Calu3 (cell line): ENCODE measurements at regions of chr3 and their contacts with region 1.

Region 1: GRCh38 chr3:124786441-124787241 is 56.4 kb downstream of the UMPS start:
- DNase-seq: peak; percentile 8
- H3K4me3 Mint-ChIP-seq: no peak overlapping the region
- H3K27ac Mint-ChIP-seq: peak overlapping the region; percentile 8
- H3K4me1 Mint-ChIP-seq: peaks cover 12% of the 10 kb centered on the region
- H3K27me3 Mint-ChIP-seq: no peaks in the 10 kb centered on the region
- CTCF ChIP-seq: no peak

Region 2: DNA sequence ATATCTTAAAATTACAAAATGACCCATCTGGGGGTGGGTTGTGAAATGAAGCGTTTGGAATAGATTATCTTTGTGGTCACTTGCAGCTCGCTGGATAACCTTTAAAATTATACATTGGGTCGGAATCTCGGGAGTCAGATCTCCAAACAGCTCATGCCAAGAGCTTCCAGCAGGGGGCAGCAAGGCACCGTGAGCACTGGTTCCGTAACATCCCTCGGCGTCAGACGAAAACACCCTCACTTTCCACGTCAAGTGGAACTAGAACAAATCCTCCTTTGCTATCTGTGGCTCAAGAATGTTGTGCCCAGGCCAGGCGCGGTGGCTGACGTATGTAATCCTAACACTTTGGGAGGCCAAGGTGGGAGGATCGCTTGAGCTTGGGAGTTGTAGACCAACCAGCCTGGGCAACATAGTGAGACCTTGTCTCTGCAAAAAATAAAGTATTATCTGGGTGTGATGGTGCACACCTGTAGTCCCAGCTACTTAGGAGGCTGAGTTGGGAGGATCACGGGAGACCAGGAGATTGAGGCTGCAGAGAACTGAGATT is 25.3 kb before region 1 on chr3:
- CTCF ChIA-PET with region 1: interaction called, 15 read pairs
- intact Hi-C with region 1: no loop called
- DNase-seq: peak; percentile 84
- H3K4me3 Mint-ChIP-seq: no peak overlapping the region
- H3K27ac Mint-ChIP-seq: no peak overlapping the region
- H3K4me1 Mint-ChIP-seq: peaks cover 10% of the 10 kb centered on the region
- H3K27me3 Mint-ChIP-seq: no peaks in the 10 kb centered on the region
- CTCF ChIP-seq: peak; percentile 96

Region 3: DNA sequence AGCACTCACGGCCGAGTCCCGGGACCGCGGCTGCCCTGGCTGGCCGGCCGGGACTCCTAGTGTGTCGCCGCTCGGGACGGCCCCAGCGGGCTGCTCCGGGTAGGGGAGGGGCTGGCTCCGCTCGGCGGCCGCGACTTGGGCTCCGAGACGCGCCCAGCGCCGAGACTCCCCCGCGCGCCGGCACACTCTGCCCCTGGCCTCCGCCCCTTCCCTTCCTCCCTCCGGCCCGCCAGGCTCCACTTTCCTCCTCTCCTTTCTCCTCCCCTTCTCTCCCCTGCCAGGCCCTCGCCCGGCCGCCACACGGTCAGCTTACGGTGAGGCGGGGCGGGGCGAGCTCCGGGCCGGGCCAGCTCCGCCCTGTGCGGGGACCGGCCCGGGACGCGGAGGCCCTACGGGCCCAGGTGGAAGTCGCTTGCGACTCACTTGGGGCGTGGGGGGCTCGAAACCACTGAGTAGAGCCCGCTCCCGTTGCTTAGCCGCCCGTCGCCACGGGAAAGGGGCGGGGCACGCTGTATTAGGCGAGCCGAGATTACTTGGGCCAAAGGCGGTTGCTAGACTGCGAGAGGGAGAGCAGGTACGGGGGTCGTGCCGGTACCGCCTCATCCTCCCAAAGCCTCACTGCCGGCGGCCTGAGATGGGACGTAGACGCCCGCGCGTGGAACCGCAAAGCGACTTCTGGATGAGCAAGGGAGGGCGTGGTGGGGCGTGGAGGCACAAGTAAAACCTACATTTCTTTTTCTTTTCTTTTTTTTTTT is 100.7 kb after region 1 on chr3 and contains the start of gene ITGB5:
- CTCF ChIA-PET with region 1: interaction called, 10 read pairs
- intact Hi-C with region 1: loop called (anchors 2 kb)
- DNase-seq: peak; percentile 86
- H3K4me3 Mint-ChIP-seq: peak within 1 kb of the TSS; percentile 78
- H3K27ac Mint-ChIP-seq: peak within 1 kb of the TSS; percentile 80
- H3K4me1 Mint-ChIP-seq: peaks cover 35% of the 10 kb centered on the region
- H3K27me3 Mint-ChIP-seq: no peaks in the 10 kb centered on the region
- CTCF ChIP-seq: no peak
- total RNA-seq, gene ITGB5: 193 and 225 TPM in 2 replicates

Region 4: DNA sequence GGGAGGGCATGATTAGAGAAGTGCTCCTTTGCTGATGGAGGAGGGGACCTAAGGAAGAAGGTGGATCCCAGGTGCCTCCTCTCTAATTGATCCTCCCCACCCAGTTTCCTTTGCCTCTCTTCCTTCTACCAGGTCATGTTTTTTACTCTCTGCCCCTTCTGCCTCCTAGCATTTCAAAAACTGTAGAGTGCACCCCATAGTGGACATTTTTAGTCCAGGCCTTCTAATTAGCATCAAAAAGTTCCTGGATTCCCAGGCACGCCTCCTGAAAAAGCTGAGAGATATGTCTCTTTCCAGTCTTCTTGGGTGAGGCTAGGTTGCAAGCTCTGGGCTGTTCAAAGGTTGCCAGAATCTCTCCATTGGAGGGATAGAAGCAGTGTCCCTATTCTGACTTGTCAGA is 119.2 kb after region 1 on chr3:
- CTCF ChIA-PET with region 1: interaction called, 69 read pairs
- intact Hi-C with region 1: loop called (anchors 1 kb)
- DNase-seq: no peak
- H3K4me3 Mint-ChIP-seq: no peak overlapping the region
- H3K27ac Mint-ChIP-seq: no peak overlapping the region
- H3K4me1 Mint-ChIP-seq: peaks cover 9% of the 10 kb centered on the region
- H3K27me3 Mint-ChIP-seq: no peaks in the 10 kb centered on the region
- CTCF ChIP-seq: no peak